Panc1 (cell line): ENCODE measurements at regions of chr9 and their contacts with region 1.

Region 1: DNA sequence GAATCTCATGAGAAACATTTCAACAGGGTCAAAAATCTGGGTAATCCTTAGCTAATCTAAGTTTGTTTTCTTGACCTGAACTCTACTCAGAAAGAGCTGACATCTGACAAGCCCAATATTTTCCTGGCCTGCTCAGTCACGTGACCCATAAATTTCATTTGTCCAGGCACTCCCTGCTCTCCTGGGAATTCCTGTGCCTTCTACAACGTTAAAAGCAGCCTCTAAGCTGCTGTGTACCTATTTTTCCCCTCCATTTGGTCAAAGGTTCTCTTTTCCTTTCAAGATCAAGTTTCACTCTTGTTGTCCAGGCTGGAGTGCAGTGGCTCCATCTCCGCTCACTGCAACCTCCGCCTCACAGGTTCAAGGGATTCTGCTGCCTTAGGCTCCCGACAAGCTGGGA is 148.8 kb upstream of the ABCA1 start:
- DNase-seq: no peak
- ATAC-seq: no peak
- H3K4me3 ChIP-seq: no peak overlapping the region
- H3K27ac ChIP-seq: no peak overlapping the region
- H3K4me1 ChIP-seq: no peaks in the 10 kb centered on the region
- H3K27me3 ChIP-seq: no peaks in the 10 kb centered on the region
- CTCF ChIP-seq: no peak

Region 2: GRCh38 chr9:104173067-104173466 is 903.7 kb before region 1 on chr9:
- CTCF ChIA-PET with region 1: no interaction called
- POLR2A ChIA-PET with region 1: no interaction called
- in situ Hi-C with region 1: no loop called
- intact Hi-C with region 1: no loop called
- DNase-seq: no peak
- ATAC-seq: no peak
- H3K4me3 ChIP-seq: no peak overlapping the region
- H3K27ac ChIP-seq: no peak overlapping the region
- H3K4me1 ChIP-seq: no peaks in the 10 kb centered on the region
- H3K27me3 ChIP-seq: no peaks in the 10 kb centered on the region
- CTCF ChIP-seq: no peak

Region 3: DNA sequence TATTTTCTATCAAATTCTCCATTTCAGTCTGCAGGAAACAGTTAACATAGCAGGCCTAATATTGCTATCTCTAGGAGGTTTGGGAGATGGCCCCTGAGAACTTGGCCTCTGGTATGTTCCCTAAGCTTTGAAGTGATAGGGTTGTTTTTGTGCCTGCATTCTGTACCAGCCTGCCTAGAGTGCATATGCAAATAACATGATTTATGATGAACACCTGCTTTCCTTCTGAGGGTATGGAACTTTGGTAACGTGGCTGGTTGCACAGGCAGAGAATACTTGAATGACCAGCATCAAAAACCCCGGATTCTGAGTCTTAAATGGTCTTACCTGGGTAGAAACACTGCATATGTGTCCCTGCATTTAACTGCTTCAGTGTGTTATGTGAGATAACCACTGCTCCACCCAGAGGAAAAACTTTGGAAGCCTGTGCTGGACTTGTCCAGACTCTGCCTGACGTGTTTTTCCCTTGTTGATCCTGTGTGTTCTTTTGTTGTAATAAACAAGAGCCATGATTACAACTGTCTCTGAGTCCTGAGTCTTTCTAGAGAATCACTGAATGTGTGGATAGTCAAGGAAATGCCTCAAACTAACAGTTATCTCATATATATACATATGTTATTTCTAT is 37.4 kb before region 1 on chr9:
- CTCF ChIA-PET with region 1: no interaction called
- POLR2A ChIA-PET with region 1: no interaction called
- in situ Hi-C with region 1: no loop called
- intact Hi-C with region 1: no loop called
- DNase-seq: no peak
- ATAC-seq: no peak
- H3K4me3 ChIP-seq: no peak overlapping the region
- H3K27ac ChIP-seq: no peak overlapping the region
- H3K4me1 ChIP-seq: no peaks in the 10 kb centered on the region
- H3K27me3 ChIP-seq: no peaks in the 10 kb centered on the region
- CTCF ChIP-seq: no peak

Region 4: DNA sequence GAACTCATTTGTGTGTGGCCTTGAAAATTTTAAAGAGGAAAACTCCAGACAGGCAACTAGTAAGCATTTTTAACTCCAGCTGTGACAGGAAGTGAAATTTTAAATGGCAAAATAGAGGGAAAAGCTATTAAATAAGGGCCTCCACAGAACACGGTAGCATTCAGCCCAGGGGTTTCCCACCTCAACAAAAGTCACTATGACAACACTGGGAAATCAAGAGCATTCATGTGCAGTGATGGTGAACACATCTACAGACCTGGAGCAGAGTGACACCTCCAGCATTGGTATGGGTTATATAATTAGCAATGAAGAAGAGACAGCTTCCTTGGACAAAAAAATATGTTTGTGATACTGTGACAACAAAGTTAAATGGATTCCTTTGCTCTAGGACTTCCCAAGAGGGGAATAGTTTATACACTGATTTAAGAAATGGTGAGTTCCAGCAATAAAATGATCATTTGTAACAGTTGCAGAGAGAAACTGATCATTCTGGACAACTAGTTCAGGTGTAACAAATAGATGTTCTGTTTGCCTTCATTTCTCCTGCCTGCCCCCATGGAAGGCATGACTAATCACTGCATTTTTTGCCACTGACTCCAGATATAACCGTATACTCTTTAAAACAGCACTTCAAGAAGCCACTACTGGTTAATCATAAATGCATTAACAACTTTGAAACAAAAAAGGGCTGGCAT is 74.4 kb after region 1 on chr9:
- CTCF ChIA-PET with region 1: no interaction called
- POLR2A ChIA-PET with region 1: no interaction called
- in situ Hi-C with region 1: no loop called
- intact Hi-C with region 1: loop called (anchors 2 kb)
- DNase-seq: no peak
- ATAC-seq: no peak
- H3K4me3 ChIP-seq: no peak overlapping the region
- H3K27ac ChIP-seq: no peak overlapping the region
- H3K4me1 ChIP-seq: no peaks in the 10 kb centered on the region
- H3K27me3 ChIP-seq: no peaks in the 10 kb centered on the region
- CTCF ChIP-seq: no peak